ENCODE measurements at regions of chr5 and their contacts with region 1.

Region 1: GRCh38 chr5:75511435-75512384 is at the starts of genes CERT1 and POLK:
- DNase-seq: peak; percentile 98 to 99 (median 99)
- ATAC-seq: peak; percentile 98 to 99 (median 99)
- H3K4me3 ChIP-seq: peak within 1 kb of the TSS; percentile 71 to 97 (median 84)
- H3K27ac ChIP-seq: peak within 1 kb of the TSS; percentile 76 to 94 (median 92)
- H3K4me1 ChIP-seq: peaks cover 4 to 59% (median 38%) of the 10 kb centered on the region in 12 donors
- H3K27me3 ChIP-seq: no peaks in the 10 kb centered on the region
- CTCF ChIP-seq: no peak
- POLR2A ChIP-seq: peak in 1 of 2 donors; percentile 87
- total RNA-seq, gene CERT1: 16.5 to 57.6 (median 36.2) TPM
- total RNA-seq, gene POLK: 16.8 to 28.8 (median 24.2) TPM

Region 2: DNA sequence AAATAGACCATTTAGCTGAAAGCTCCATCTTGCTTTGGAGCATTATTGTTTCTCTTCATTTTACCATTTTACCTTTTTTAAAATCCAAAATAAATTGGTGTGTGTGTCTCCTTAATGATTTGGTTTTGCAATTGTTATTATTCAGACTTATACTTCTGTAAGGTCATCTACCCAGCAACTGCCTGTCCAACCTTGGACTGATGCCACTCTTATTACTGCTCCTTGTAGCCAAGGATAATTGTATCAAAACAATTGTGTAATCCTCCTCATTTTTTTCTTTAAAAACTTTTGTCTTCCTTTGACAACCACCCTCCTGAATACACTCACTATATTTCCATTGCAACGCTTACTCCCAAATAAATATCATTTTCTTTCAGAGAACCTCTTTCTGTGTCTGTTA is 205.0 kb before region 1 on chr5:
- intact Hi-C with region 1: no loop called
- DNase-seq: no peak
- ATAC-seq: no peak
- H3K4me3 ChIP-seq: no peak overlapping the region
- H3K27ac ChIP-seq: no peak overlapping the region
- H3K4me1 ChIP-seq: no peaks in the 10 kb centered on the region
- H3K27me3 ChIP-seq: peaks cover 0 to 2% (median 0%) of the 10 kb centered on the region in 9 donors
- CTCF ChIP-seq: no peak
- POLR2A ChIP-seq: no peak

Region 3: DNA sequence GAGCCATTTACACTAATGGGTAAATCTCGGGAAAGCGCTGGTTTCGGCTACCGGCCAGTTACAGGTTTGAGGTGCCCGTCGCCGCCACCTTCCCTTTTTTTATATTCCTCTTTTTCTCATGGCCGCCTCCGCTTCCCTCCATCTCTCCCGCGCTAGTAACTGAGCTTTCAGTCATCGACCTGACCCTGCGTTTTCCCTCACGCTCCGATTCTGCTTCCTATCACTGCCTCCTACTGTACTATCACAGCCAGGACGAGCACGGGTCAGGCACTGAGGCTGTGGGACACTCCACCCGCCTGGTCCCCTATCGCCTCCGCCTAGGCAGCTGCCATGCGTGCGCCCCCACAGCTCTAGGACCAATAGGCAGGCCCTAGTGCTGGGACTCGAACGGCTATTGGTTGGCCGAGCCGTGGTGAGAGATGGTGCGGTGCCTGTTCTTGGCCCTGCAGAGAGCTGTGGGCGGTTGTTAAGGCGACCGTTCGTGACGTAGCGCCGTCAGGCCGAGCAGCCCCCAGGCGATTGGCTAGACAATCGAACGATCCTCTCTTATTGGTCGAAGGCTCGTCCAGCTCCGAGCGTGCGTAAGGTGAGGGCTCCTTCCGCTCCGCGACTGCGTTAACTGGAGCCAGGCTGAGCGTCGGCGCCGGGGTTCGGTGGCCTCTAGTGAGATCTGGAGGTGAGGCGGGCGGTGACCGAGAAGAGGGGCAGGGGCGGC is 174.9 kb before region 1 on chr5 and contains the start of gene HMGCR:
- intact Hi-C with region 1: loop called in 1 of 10 experiments (anchors 2 kb)
- DNase-seq: peak; percentile 99 to 100 (median 99)
- ATAC-seq: peak; percentile 99 to 100 (median 100)
- H3K4me3 ChIP-seq: peak within 1 kb of the TSS; percentile 75 to 99 (median 89)
- H3K27ac ChIP-seq: peak within 1 kb of the TSS; percentile 54 to 98 (median 88)
- H3K4me1 ChIP-seq: peaks cover 0 to 28% (median 14%) of the 10 kb centered on the region in 12 donors
- H3K27me3 ChIP-seq: no peaks in the 10 kb centered on the region
- CTCF ChIP-seq: peak in 5 of 12 donors; percentile 19 to 55 (median 35)
- POLR2A ChIP-seq: peak in 1 of 2 donors; percentile 69
- total RNA-seq, gene HMGCR: 6.0 to 15.2 (median 11.9) TPM

Region 4: DNA sequence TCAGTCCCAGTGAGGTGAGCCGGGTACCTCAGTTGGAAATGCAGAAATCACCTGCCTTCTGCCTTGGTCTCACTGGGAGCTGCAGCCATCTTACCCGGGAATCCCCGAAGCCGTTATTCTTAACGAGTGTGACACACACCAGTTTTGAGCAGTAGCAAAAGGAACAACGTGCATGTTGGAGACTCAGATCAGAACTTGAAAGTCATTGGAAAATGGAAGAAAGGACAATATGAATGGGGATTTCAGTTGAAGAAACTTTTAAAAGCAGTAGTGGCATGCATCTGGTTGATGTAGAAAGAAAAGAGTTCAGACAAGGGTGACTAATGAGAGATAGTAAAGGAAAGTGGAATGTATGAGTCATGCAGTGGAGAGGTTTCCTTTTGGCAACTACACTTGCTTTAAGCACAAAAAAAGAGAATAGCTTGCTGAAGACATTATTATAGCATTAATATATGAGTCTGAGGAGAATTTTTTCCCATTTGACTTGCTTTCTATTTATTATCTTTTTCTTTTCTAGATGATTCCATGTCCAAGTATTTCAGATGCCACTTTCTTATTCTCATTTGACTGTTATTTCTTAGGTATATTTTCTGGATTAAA is 55.1 kb after region 1 on chr5:
- intact Hi-C with region 1: loop called in 7 of 10 experiments (anchors 2 to 10 kb)
- DNase-seq: no peak
- ATAC-seq: peak; percentile 91 to 99 (median 96)
- H3K4me3 ChIP-seq: peak overlapping the region in 2 of 12 donors; percentile 6 to 8
- H3K27ac ChIP-seq: peak overlapping the region in 11 of 12 donors; percentile 33 to 75 (median 61)
- H3K4me1 ChIP-seq: peaks cover 0 to 51% (median 29%) of the 10 kb centered on the region in 12 donors
- H3K27me3 ChIP-seq: no peaks in the 10 kb centered on the region
- CTCF ChIP-seq: no peak
- POLR2A ChIP-seq: no peak

Region 5: GRCh38 chr5:75668977-75669689 is 157.4 kb after region 1 on chr5:
- intact Hi-C with region 1: loop called in 2 of 10 experiments (anchors 5 to 10 kb)
- DNase-seq: peak in 3 of 5 donors; percentile 28 to 41 (median 39)
- ATAC-seq: peak; percentile 46 to 87 (median 75)
- H3K4me3 ChIP-seq: peak overlapping the region in 9 of 12 donors; percentile 1 to 41 (median 34)
- H3K27ac ChIP-seq: peak overlapping the region in 2 of 12 donors; percentile 28 to 72
- H3K4me1 ChIP-seq: peaks cover 0 to 18% (median 4%) of the 10 kb centered on the region in 12 donors
- H3K27me3 ChIP-seq: no peaks in the 10 kb centered on the region
- CTCF ChIP-seq: no peak
- POLR2A ChIP-seq: no peak

Measured in heart left ventricle (tissue), 16 donors.